Endothelial cell of umbilical vein (primary cell): ENCODE measurements at regions of chr2 and their contacts with region 1.

Region 1: DNA sequence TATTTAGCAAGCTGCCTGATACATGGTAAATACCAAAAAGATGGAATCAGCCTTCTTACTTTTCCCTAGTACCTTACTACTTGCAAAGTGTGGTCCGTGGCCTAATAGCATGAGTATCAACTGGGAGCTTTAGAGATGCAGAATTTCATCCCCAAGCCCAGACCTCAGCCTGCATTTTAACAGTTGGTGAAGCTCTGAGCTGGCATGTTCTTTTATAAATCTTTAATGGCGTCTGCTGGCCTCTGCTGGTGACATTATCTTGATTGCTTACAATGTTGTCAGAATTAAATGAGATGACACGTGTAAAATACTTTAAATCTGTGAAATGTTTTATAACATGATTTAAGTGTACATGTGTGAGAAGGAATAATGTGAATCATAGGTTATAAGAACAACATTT is 115.1 kb upstream of the NOSTRIN start:
- DNase-seq: peak; percentile 44
- H3K4me3 ChIP-seq: no peak overlapping the region
- H3K27ac ChIP-seq: peak overlapping the region; percentile 65
- H3K4me1 ChIP-seq: peaks cover 17% of the 10 kb centered on the region
- H3K27me3 ChIP-seq: no peaks in the 10 kb centered on the region
- CTCF ChIP-seq: no peak
- POLR2A ChIP-seq: no peak

Region 2: GRCh38 chr2:168632709-168633121 is 54.6 kb before region 1 on chr2:
- CTCF ChIA-PET with region 1: interaction called, 3 read pairs
- POLR2A ChIA-PET with region 1: no interaction called
- dilution Hi-C with region 1: no loop called
- intact Hi-C with region 1: loop called (anchors 2 kb)
- DNase-seq: peak; percentile 85
- H3K4me3 ChIP-seq: no peak overlapping the region
- H3K27ac ChIP-seq: peak overlapping the region; percentile 82
- H3K4me1 ChIP-seq: peaks cover 16% of the 10 kb centered on the region
- H3K27me3 ChIP-seq: no peaks in the 10 kb centered on the region
- CTCF ChIP-seq: no peak
- POLR2A ChIP-seq: no peak

Region 3: DNA sequence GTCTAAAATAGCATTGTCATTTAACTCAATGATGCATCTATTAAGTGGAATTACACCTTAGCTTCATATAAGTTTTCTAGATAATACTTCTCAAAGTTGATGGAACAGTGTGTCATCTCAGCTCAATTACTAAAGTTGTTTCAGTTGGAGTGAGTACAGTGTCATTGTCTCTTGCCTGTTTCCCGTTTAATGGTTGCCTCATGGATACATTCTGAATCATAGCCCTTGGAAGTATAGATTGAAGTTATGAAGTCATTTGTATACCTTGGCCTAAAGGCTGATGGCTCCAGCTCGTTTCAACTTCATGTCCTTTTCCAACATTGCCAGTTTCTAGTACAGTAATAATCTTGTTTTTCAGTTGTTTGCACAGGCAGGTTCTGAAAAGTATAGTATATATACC is 15.4 kb before region 1 on chr2:
- CTCF ChIA-PET with region 1: interaction called, 13 read pairs
- POLR2A ChIA-PET with region 1: no interaction called
- dilution Hi-C with region 1: no loop called
- intact Hi-C with region 1: no loop called
- DNase-seq: peak; percentile 48
- H3K4me3 ChIP-seq: no peak overlapping the region
- H3K27ac ChIP-seq: no peak overlapping the region
- H3K4me1 ChIP-seq: no peaks in the 10 kb centered on the region
- H3K27me3 ChIP-seq: no peaks in the 10 kb centered on the region
- CTCF ChIP-seq: no peak
- POLR2A ChIP-seq: no peak

Region 4: GRCh38 chr2:168726375-168726774 is 39.1 kb after region 1 on chr2:
- CTCF ChIA-PET with region 1: no interaction called
- POLR2A ChIA-PET with region 1: no interaction called
- dilution Hi-C with region 1: no loop called
- intact Hi-C with region 1: no loop called
- DNase-seq: no peak
- H3K4me3 ChIP-seq: no peak overlapping the region
- H3K27ac ChIP-seq: no peak overlapping the region
- H3K4me1 ChIP-seq: peaks cover 13% of the 10 kb centered on the region
- H3K27me3 ChIP-seq: no peaks in the 10 kb centered on the region
- CTCF ChIP-seq: no peak
- POLR2A ChIP-seq: no peak

Region 5: DNA sequence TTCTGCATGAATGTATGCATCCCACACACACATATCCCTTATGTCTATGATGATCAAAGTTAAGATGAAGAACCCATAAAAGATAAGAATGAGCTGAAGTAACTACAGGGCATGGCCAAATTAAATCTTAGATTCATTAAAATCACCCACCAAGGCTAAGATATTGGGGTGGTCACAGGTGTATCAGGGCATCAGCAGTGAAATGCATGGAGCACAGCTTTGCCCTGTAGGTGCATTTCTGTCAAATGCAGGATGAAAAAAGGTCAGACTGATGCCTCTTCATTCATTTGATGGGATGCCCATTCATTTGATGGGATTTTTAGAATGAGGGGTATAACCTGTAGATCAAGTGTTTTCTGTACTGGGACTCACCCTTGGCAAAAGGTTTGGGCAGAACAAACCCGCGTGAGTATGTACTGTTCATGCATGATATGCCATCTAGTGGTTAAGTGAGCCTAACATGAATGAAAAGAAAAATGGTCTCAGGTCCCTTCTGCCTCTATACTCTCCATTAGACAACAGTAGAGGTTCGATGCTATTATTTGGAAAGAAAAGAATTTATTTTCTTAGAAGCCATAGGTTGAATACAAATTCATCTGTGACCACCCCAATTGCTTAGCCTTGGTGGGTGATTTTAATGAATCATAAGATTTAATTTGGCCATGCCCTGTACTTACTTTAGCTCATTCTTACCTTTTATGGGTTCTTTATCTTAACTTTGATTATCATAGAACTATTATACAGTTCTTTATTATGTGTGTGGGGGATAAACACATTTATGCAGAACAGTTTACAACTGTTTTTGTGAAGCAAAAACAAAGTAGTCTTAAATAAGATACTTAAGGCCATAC is 71.9 kb after region 1 on chr2:
- CTCF ChIA-PET with region 1: interaction called, 3 read pairs
- POLR2A ChIA-PET with region 1: no interaction called
- dilution Hi-C with region 1: no loop called
- intact Hi-C with region 1: loop called (anchors 5 kb)
- DNase-seq: peak; percentile 58
- H3K4me3 ChIP-seq: no peak overlapping the region
- H3K27ac ChIP-seq: no peak overlapping the region
- H3K4me1 ChIP-seq: peaks cover 14% of the 10 kb centered on the region
- H3K27me3 ChIP-seq: no peaks in the 10 kb centered on the region
- CTCF ChIP-seq: peak; percentile 40 to 62
- POLR2A ChIP-seq: no peak